HCT116 (cell line): ENCODE measurements at regions of chr3 and their contacts with region 1.

Region 1: DNA sequence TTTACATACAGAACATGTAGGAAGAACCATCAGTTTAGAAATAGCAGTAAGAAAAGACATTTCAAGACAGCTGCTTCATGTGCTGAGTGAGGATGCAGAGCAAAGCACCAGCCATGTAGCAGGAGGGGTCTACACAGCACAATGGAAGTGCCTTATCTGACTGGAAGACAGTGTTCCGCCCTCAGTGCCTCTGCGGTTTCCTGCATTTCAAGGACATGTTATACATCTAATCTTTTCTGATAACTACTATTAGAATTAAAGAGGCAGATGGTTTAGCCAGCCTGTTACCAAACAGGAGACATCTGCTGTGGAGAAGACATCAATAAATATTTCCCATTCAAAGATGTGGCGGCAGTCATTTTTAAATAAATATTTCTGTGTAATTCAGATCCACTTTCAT is 10.6 kb downstream of the LSG1 start:
- DNase-seq: no peak
- ATAC-seq: no peak
- H3K4me3 ChIP-seq: no peak overlapping the region
- H3K27ac ChIP-seq: no peak overlapping the region
- H3K4me1 ChIP-seq: no peaks in the 10 kb centered on the region
- H3K27me3 ChIP-seq: no peaks in the 10 kb centered on the region
- CTCF ChIP-seq: no peak
- POLR2A ChIP-seq: no peak
- RAD21 ChIP-seq: no peak

Region 2: GRCh38 chr3:194671900-194672808 is 10.8 kb after region 1 on chr3 and contains the start of gene LSG1:
- CTCF ChIA-PET with region 1: interaction called, 14 read pairs
- POLR2A ChIA-PET with region 1: no interaction called
- RAD21 ChIA-PET with region 1: no interaction called
- intact Hi-C with region 1: no loop called
- DNase-seq: peak; percentile 95
- ATAC-seq: peak; percentile 93
- H3K4me3 ChIP-seq: peak within 1 kb of the TSS; percentile 89 to 95
- H3K27ac ChIP-seq: peak within 1 kb of the TSS; percentile 43
- H3K4me1 ChIP-seq: peaks cover 7 to 19% of the 10 kb centered on the region in 2 experiments; a peak in 3 of 4 replicates
- H3K27me3 ChIP-seq: no peaks in the 10 kb centered on the region; the same call in 1 of the 2 replicates
- CTCF ChIP-seq: no peak
- POLR2A ChIP-seq: peak; percentile 26
- RAD21 ChIP-seq: no peak
- total RNA-seq, gene LSG1: 39.7 TPM